Activated CD8-positive, alpha-beta T cell treated with anti-CD3 and anti-CD28 coated beads, Interleukin-2, amount 10 ng/mL, durations not matched to agents 7 days and 5 days (primary cell): ENCODE measurements at regions of chr21 and their contacts with region 1.

Region 1: DNA sequence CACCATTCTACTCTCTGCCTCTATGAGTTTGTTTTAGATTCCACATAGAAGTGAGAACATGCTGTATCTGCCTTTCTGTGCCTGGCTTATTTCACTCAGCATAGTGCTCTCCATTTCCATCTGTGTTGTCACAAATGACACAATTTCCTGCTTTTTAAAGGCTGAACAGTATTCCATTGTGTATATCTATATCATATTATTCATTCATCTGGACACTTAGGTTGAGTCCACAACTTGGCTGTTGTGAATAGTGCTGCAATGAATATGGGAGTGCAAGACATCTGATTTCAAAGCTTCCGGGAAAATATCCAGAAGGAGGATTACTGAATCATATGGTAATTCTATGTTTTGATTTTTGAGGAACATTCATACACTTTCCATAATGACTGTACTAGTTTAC is 20.1 kb upstream of the DONSON start:
- DNase-seq: no peak
- ATAC-seq: no peak
- H3K4me3 Mint-ChIP-seq: no peak overlapping the region
- H3K27ac Mint-ChIP-seq: no peak overlapping the region
- H3K4me1 Mint-ChIP-seq: peaks cover 4% of the 10 kb centered on the region
- H3K27me3 Mint-ChIP-seq: no peaks in the 10 kb centered on the region

Region 2: GRCh38 chr21:33542640-33543504 is 65.7 kb before region 1 on chr21 and contains the start of gene SON:
- CTCF ChIA-PET with region 1: interaction called, 20 read pairs
- POLR2A ChIA-PET with region 1: interaction called, 5 read pairs
- DNase-seq: peak; percentile 99
- ATAC-seq: peak; percentile 95
- H3K4me3 Mint-ChIP-seq: peak within 1 kb of the TSS; percentile 95
- H3K27ac Mint-ChIP-seq: peak within 1 kb of the TSS; percentile 99
- H3K4me1 Mint-ChIP-seq: peaks cover 32% of the 10 kb centered on the region
- H3K27me3 Mint-ChIP-seq: no peaks in the 10 kb centered on the region
- total RNA-seq, gene SON: 284 to 285 TPM

Region 3: DNA sequence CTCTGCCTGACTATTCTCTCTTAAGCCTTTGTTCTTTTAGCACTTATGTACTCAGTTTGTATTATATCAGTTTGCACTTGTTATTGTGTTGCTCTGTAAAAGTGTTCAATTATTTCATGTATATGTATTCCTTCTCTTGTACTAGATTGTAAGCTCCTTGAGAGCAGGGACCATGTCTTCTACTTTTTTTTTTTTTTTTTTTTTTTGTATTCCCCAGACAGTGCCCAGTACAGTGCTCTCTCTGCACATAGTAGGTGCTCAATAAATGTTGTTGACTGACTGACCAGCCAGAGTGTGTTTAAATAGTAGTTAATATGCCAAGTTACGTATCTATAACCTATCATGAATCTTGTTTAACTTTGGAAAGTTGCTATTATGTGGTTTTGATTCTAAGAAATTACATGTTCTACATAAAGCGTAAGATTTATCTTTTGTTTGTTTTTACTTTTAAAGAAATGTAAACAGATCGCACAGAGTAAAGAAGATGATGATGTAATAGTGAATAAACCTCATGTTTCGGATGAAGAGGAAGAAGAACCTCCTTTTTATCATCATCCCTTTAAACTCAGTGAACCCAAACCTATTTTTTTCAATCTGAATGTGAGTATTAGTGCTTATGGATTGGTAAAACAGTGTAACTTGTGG is 49.7 kb before region 1 on chr21:
- CTCF ChIA-PET with region 1: interaction called, 17 read pairs
- POLR2A ChIA-PET with region 1: no interaction called
- DNase-seq: no peak
- ATAC-seq: no peak
- H3K4me3 Mint-ChIP-seq: no peak overlapping the region
- H3K27ac Mint-ChIP-seq: no peak overlapping the region
- H3K4me1 Mint-ChIP-seq: peaks cover 35% of the 10 kb centered on the region
- H3K27me3 Mint-ChIP-seq: no peaks in the 10 kb centered on the region

Region 4: DNA sequence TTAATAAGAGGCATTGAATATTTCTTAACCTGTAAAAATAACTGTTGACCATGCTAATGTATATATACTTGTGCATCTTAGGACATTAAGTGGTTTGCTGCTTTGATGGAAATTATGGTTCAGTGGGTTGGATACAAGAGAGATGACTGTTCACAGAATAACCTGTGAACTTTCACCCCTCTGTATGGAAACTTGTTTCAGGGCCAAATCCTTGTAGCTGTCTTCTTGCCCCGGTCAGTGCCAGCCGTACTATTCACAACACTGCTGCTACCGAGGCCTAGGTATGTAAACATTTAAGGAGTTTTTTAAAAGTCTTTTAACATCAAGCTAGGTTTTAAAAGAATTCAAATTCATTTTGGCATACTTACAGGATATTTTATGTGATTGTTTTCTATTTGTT is 36.2 kb before region 1 on chr21:
- CTCF ChIA-PET with region 1: interaction called, 30 read pairs
- POLR2A ChIA-PET with region 1: no interaction called
- DNase-seq: no peak
- ATAC-seq: no peak
- H3K4me3 Mint-ChIP-seq: no peak overlapping the region
- H3K27ac Mint-ChIP-seq: no peak overlapping the region
- H3K4me1 Mint-ChIP-seq: no peaks in the 10 kb centered on the region
- H3K27me3 Mint-ChIP-seq: no peaks in the 10 kb centered on the region

Region 5: DNA sequence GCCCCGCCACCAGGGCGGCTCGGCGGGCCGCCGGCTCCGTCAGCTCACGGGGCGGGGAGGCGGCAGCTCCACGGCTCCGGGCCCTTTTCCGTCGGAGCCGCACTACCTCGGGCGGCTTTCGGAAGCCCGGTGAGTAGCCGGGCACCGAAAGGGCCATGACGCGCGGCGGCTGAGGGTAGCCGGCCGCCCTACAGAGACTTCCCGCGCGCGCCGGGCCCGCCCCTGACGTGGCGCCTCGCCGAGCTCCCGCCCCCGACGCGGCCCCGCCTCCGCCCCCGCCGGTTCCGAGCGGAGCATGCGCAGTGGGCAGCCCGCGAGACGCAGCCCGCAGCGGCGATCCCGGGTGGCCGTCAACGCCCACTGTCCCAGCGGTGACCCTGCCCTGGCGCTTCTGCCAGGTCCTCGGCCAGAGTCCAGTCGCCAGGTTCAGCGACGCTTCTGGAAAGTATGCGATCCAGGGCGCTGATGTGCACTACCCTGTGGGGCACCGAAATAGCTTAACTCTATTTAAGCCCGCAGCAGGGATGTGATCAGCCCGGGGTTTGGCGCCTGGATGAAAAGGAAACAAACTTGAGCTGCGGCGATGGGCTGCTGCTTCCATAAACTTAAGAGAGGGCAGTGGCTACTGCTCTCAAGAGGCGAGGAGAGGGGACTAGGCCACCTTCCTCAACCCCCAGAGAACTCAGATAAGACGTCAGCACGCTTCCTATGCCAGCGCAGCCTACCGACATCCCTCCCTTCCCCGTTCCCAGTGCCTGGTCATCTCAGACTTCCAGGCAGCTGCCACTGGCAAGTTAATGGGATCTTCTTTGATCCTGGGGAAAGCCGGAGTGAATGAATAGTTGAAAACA is 19.8 kb before region 1 on chr21 and contains the start of gene DONSON:
- CTCF ChIA-PET with region 1: interaction called, 74 read pairs
- POLR2A ChIA-PET with region 1: interaction called, 7 read pairs
- DNase-seq: peak; percentile 88
- ATAC-seq: peak; percentile 96
- H3K4me3 Mint-ChIP-seq: peak within 1 kb of the TSS; percentile 91
- H3K27ac Mint-ChIP-seq: peak within 1 kb of the TSS; percentile 89
- H3K4me1 Mint-ChIP-seq: peaks cover 26% of the 10 kb centered on the region
- H3K27me3 Mint-ChIP-seq: no peaks in the 10 kb centered on the region
- total RNA-seq, gene DONSON: 43.3 to 44.1 TPM

Region 6: DNA sequence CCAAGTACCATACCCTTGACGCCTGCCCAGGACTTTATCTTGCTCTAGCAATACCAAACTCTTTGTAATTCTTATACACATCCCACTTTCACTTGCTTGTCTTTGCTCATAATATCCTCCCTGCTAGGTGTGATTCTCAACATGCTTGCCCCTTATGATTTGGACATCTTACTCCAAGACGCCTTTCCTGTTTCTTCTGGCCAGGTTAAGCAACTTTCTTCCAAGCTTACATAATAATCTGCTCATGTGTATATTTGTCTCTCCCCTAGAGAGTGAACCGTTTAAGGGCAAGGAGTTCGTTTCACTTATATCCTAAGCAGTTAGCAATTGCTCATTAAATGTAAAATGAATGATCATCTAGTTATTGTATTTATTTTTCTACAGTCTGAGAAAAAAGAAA is 11.2 kb after region 1 on chr21:
- CTCF ChIA-PET with region 1: interaction called, 24 read pairs
- POLR2A ChIA-PET with region 1: interaction called, 5 read pairs
- DNase-seq: no peak
- ATAC-seq: no peak
- H3K4me3 Mint-ChIP-seq: no peak overlapping the region
- H3K27ac Mint-ChIP-seq: no peak overlapping the region
- H3K4me1 Mint-ChIP-seq: no peaks in the 10 kb centered on the region
- H3K27me3 Mint-ChIP-seq: no peaks in the 10 kb centered on the region

Region 7: GRCh38 chr21:33636712-33637111 is 28.2 kb after region 1 on chr21:
- CTCF ChIA-PET with region 1: interaction called, 13 read pairs
- POLR2A ChIA-PET with region 1: no interaction called
- DNase-seq: no peak
- ATAC-seq: no peak
- H3K4me3 Mint-ChIP-seq: no peak overlapping the region
- H3K27ac Mint-ChIP-seq: no peak overlapping the region
- H3K4me1 Mint-ChIP-seq: peaks cover 19% of the 10 kb centered on the region
- H3K27me3 Mint-ChIP-seq: no peaks in the 10 kb centered on the region

Region 8: DNA sequence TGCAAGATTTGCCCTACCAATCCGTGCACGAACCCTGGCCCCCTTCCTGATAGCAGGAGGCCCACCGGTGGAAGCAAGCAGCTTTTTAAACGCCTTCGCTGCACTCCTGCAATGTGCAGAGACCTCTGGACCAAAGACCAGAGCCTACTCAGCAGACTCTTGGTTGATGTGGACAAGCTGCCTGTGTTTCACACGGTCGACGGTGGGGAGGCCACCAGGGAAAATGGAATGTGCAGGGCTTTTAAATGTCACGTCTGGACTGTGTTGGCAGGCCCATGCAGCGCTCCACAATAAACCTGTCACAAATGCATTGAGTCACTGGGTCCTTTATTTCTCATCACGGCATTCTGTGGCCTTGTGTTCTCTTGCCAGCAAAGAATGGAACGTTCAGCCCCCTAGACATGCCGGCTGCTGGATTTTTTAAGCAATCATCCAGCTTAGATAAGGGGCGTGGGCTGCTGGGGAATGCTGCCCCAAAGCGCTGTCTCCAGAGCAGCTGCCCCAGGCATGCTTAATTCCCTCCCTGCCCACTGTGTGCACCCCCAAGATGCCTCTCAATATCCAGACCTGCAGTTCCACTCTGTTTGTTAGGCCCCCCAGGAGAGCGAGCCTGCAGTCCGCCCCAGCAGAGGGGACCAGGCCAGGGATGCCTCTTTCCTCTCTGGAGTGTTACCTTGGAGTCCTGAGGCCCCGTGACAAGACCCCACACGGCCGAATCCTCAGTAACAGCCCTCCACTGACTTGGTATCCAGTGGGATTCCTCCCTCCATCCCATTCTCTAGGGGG is 235.7 kb after region 1 on chr21:
- CTCF ChIA-PET with region 1: no interaction called
- POLR2A ChIA-PET with region 1: no interaction called
- DNase-seq: no peak
- ATAC-seq: no peak
- H3K4me3 Mint-ChIP-seq: no peak overlapping the region
- H3K27ac Mint-ChIP-seq: no peak overlapping the region
- H3K4me1 Mint-ChIP-seq: no peaks in the 10 kb centered on the region
- H3K27me3 Mint-ChIP-seq: no peaks in the 10 kb centered on the region